Vagina (tissue), 2 donors: ENCODE measurements at regions of chr11 and their contacts with region 1.

Region 1: GRCh38 chr11:77522215-77522614 is 48.3 kb upstream of the PAK1 start:
- DNase-seq: no peak
- H3K4me3 ChIP-seq: no peak overlapping the region
- H3K27ac ChIP-seq: no peak overlapping the region
- H3K4me1 ChIP-seq: no peaks in the 10 kb centered on the region
- H3K27me3 ChIP-seq: no peaks in the 10 kb centered on the region
- CTCF ChIP-seq: no peak
- POLR2A ChIP-seq: no peak

Region 2: DNA sequence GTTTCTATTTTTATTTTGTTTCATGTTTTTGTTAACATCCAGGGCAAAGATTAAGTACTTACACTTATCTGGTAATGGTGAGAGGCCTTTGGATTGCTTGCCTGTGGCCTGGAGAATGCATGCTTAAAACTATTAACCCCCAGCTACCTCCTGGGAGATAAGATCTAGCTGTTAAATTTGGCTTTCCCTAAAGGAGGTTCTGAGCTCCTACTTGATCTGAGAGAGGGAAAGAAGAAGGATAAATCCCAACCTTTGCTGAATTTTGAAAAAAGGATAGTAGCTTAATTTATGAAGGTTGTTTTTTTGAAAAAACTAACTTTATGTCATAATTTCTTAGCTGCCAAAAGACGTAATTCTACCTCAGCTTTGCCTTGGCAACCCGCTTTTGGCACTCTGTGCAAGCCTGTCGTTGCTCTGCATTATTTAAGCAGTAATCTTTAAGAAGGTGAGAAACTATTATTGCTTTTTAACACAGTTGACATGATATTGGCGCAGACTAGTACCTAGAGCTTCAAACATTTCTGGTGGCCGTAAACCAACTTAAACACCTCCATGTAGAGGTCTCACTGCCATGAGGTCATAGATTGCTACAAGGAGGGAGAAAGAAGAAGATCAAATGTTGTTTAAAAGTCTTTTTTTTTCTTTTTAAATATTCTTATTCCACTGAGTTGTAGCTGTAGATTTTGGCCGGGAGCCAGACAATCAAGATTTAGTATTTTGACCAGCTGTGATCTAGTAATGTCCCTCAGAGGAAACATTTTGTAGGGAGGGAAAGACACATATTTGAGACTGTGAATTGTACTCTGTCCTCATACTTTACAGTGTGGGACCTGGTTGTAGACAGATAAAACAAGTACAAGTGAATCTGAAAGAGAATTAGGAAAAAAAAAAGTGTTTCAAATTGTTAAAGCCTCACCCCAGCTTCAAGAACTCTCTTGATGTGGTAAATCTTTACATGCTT is 1390.3 kb before region 1 on chr11:
- intact Hi-C with region 1: loop called (anchors 5 kb)
- DNase-seq: no peak
- H3K4me3 ChIP-seq: no peak overlapping the region
- H3K27ac ChIP-seq: peak overlapping the region; percentile 47
- H3K4me1 ChIP-seq: peaks cover 38% of the 10 kb centered on the region
- H3K27me3 ChIP-seq: no peaks in the 10 kb centered on the region
- CTCF ChIP-seq: no peak
- POLR2A ChIP-seq: no peak

Region 3: DNA sequence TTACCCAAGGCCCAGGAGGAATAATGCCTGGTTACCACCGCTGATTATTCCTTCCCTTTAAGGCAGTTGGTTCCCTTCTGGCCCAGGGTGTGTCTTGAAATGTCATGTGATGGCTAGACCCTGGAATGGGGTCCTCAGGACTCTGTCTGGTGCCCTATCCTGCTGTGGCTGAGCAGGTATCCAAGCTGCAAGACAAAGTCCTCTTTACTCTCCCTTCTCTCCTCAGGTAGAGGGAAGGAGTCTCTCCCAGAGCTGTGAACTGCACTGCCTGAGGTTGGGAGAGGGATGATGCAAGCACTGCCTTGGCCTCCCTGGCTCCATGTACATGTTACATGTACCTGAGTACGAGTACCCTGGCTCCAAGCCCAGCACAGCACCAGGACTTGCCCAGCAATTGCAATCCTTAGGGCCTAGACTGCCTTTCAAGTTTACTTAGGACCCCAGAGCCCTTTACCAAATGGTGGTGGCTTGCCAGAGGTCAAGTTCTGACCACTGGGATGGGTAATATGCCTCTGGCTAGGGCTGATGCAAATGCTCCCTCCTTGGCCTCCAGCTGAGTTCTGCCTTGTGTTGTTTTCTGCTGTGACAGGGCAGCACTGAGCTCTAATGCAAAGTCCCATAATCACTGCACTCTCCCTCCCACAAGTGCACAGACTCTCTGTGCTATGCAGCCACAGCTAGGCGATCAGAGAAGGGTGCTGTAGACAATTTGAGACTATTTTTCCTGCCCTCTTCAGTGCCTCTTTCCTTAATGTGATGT is 46.9 kb after region 1 on chr11:
- intact Hi-C with region 1: no loop called
- DNase-seq: no peak
- H3K4me3 ChIP-seq: no peak overlapping the region
- H3K27ac ChIP-seq: no peak overlapping the region
- H3K4me1 ChIP-seq: no peaks in the 10 kb centered on the region
- H3K27me3 ChIP-seq: no peaks in the 10 kb centered on the region
- CTCF ChIP-seq: no peak
- POLR2A ChIP-seq: no peak

Region 4: GRCh38 chr11:77589521-77590193 is 67.4 kb after region 1 on chr11 and contains the start of gene AQP11:
- intact Hi-C with region 1: no loop called
- DNase-seq: no peak
- H3K4me3 ChIP-seq: peak within 1 kb of the TSS; percentile 60 to 76
- H3K27ac ChIP-seq: peak within 1 kb of the TSS; percentile 82
- H3K4me1 ChIP-seq: no peaks in the 10 kb centered on the region
- H3K27me3 ChIP-seq: no peaks in the 10 kb centered on the region
- CTCF ChIP-seq: no peak
- POLR2A ChIP-seq: no peak
- total RNA-seq, gene AQP11: 1.7 TPM